Activated CD8-positive, alpha-beta T cell treated with anti-CD3 and anti-CD28 coated beads for 36 hours (primary cell): ENCODE measurements at regions of chr6 and their contacts with region 1.

Region 1: GRCh38 chr6:130282234-130282995 is 59.7 kb upstream of the SAMD3 start:
- DNase-seq: peak; percentile 52
- ATAC-seq: peak; percentile 90
- H3K4me3 Mint-ChIP-seq: no peak overlapping the region
- H3K27ac Mint-ChIP-seq: peak overlapping the region; percentile 29
- H3K4me1 Mint-ChIP-seq: peaks cover 7% of the 10 kb centered on the region
- H3K27me3 Mint-ChIP-seq: no peaks in the 10 kb centered on the region
- CTCF ChIP-seq: peak; percentile 52

Region 2: DNA sequence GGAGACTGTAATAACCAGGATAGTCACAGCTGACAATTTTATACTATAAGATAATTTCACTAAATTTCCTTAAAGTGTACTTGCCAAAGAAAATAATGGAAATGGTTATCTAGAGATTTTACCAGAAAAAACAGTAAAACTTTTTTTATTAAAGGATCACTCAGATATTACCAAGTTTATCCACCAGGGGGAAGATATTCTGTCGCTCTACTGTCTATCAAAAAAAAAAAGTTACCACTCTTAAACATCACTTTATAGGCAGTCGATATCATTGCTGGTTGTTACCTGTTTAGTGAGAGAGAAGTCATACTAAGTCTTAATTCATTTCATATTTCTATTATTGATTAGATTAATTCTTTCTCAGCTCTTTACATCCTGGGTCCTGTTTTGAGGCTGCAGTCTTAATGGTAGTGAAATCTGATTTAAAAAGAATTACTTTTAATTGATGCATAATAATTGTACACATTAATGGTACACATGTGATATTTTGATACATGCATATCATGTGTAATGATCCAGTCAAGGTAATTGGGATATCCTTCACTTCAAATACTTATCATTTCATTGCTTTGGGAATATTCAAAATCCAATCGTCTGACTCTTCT is 245.1 kb before region 1 on chr6:
- CTCF ChIA-PET with region 1: interaction called, 3 read pairs
- POLR2A ChIA-PET with region 1: no interaction called
- intact Hi-C with region 1: loop called (anchors 5 kb)
- DNase-seq: no peak
- ATAC-seq: no peak
- H3K4me3 Mint-ChIP-seq: no peak overlapping the region
- H3K27ac Mint-ChIP-seq: no peak overlapping the region
- H3K4me1 Mint-ChIP-seq: peaks cover 70% of the 10 kb centered on the region
- H3K27me3 Mint-ChIP-seq: no peaks in the 10 kb centered on the region
- CTCF ChIP-seq: peak; percentile 79

Region 3: DNA sequence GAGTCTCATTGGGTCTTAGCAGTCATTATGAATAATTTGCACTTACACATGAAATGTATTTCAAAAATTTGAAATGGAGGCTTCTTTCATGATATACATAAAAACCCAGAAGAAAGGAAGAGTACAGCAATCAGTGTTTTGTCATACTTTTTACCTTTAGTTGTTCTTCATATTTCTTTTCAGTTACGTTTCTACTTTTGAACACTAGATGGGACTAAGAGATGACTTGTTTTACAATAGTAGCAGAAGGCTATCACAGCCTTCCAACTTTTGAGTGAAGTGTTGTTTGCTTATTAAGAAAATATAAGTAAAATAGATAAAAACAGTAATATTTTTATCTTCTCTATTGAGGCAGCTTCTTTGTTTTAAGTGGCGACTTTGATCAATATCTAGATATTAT is 205.9 kb before region 1 on chr6:
- CTCF ChIA-PET with region 1: interaction called, 15 read pairs
- POLR2A ChIA-PET with region 1: no interaction called
- intact Hi-C with region 1: no loop called
- DNase-seq: no peak
- ATAC-seq: peak; percentile 42
- H3K4me3 Mint-ChIP-seq: no peak overlapping the region
- H3K27ac Mint-ChIP-seq: no peak overlapping the region
- H3K4me1 Mint-ChIP-seq: peaks cover 16% of the 10 kb centered on the region
- H3K27me3 Mint-ChIP-seq: no peaks in the 10 kb centered on the region
- CTCF ChIP-seq: peak; percentile 40

Region 4: DNA sequence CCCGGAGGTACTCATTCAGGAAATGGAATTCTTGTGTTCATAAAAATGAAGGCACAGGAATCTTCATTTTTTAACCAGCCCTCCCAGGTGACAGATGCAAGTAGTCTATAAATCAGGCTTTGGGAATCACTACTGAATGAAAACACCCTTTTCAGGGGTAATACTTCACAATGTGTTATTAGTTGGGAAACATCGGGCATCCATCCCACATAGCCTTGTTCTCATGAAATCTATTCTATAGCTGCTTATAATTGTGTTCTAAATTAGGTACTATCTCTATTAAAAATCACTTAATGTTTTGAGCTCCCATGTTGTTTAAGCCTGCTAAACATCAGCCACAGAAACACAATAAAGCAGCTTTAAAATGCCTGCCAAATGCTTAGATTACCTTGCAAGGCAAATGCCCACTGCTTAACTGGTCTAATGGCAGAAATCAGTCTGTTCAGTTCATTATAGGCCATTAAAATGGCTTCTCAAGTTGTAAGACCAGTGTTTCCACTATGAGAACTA is 169.2 kb before region 1 on chr6:
- CTCF ChIA-PET with region 1: interaction called, 11 read pairs
- POLR2A ChIA-PET with region 1: no interaction called
- intact Hi-C with region 1: no loop called
- DNase-seq: no peak
- ATAC-seq: no peak
- H3K4me3 Mint-ChIP-seq: no peak overlapping the region
- H3K27ac Mint-ChIP-seq: no peak overlapping the region
- H3K4me1 Mint-ChIP-seq: peaks cover 7% of the 10 kb centered on the region
- H3K27me3 Mint-ChIP-seq: no peaks in the 10 kb centered on the region
- CTCF ChIP-seq: no peak

Region 5: GRCh38 chr6:130240232-130240631 is 42.2 kb before region 1 on chr6:
- CTCF ChIA-PET with region 1: interaction called, 16 read pairs
- POLR2A ChIA-PET with region 1: interaction called, 3 read pairs
- intact Hi-C with region 1: no loop called
- DNase-seq: no peak
- ATAC-seq: no peak
- H3K4me3 Mint-ChIP-seq: no peak overlapping the region
- H3K27ac Mint-ChIP-seq: no peak overlapping the region
- H3K4me1 Mint-ChIP-seq: no peaks in the 10 kb centered on the region
- H3K27me3 Mint-ChIP-seq: no peaks in the 10 kb centered on the region
- CTCF ChIP-seq: no peak